Activated naive CD4-positive, alpha-beta T cell treated with anti-CD3 and anti-CD28 coated beads for 36 hours (primary cell): ENCODE measurements at regions of chr9 and their contacts with region 1.

Region 1: GRCh38 chr9:120936011-120936763 is 9.6 kb upstream of the TRAF1 start:
- DNase-seq: peak; percentile 97
- H3K4me3 Mint-ChIP-seq: peak overlapping the region; percentile 49
- H3K27ac Mint-ChIP-seq: peak overlapping the region; percentile 99
- H3K4me1 Mint-ChIP-seq: peaks cover 61% of the 10 kb centered on the region
- H3K27me3 Mint-ChIP-seq: no peaks in the 10 kb centered on the region

Region 2: GRCh38 chr9:120714088-120714845 is 221.9 kb before region 1 on chr9 and contains the start of gene MEGF9:
- CTCF ChIA-PET with region 1: no interaction called
- intact Hi-C with region 1: loop called (anchors 5 kb)
- DNase-seq: peak; percentile 99
- H3K4me3 Mint-ChIP-seq: peak within 1 kb of the TSS; percentile 84
- H3K27ac Mint-ChIP-seq: peak within 1 kb of the TSS; percentile 30
- H3K4me1 Mint-ChIP-seq: peaks cover 39% of the 10 kb centered on the region
- H3K27me3 Mint-ChIP-seq: no peaks in the 10 kb centered on the region
- total RNA-seq, gene MEGF9: 3.8 TPM

Region 3: DNA sequence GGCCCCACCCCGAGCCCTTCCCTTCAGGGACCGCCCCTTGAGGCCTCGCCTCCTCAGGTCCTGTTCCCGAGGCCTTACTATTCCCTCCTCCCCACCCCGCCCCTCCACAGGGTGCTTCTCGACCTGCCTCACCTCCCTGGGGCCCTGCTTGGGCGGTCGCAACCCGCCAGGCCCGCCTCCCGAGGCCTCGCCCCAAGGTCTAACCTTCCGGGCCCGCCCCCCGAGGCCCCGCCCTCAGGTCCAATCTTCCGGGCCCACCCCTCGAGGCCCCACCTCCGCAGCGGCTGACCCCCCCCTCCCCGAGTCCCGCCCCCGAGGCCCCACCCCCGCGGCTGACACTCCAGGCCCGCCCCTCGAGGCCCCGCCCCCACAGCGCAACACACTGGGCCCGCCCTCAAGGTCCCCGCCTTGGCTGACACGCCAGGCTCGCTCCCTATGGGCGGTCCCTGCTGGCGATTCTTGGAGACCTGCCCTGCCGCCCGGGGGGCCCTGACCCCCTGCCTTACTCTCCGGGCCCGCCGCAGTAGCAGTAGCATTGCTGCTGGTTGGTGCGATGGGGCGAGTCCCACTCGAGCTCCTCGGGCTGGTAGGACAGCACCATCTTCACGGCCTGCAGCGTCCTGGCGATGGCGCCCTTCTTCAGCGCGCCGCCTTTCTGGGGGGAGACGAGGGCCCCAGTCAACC is 67.4 kb before region 1 on chr9:
- CTCF ChIA-PET with region 1: interaction called, 7 read pairs
- intact Hi-C with region 1: loop called (anchors 1 kb)
- DNase-seq: peak; percentile 97
- H3K4me3 Mint-ChIP-seq: peak overlapping the region; percentile 74
- H3K27ac Mint-ChIP-seq: peak overlapping the region; percentile 87
- H3K4me1 Mint-ChIP-seq: peaks cover 49% of the 10 kb centered on the region
- H3K27me3 Mint-ChIP-seq: no peaks in the 10 kb centered on the region

Region 4: GRCh38 chr9:120892748-120893610 is 43.2 kb before region 1 on chr9:
- CTCF ChIA-PET with region 1: interaction called, 8 read pairs
- intact Hi-C with region 1: loop called (anchors 1 kb)
- DNase-seq: peak; percentile 86
- H3K4me3 Mint-ChIP-seq: peak overlapping the region; percentile 70
- H3K27ac Mint-ChIP-seq: peak overlapping the region; percentile 97
- H3K4me1 Mint-ChIP-seq: peaks cover 90% of the 10 kb centered on the region
- H3K27me3 Mint-ChIP-seq: no peaks in the 10 kb centered on the region

Region 5: DNA sequence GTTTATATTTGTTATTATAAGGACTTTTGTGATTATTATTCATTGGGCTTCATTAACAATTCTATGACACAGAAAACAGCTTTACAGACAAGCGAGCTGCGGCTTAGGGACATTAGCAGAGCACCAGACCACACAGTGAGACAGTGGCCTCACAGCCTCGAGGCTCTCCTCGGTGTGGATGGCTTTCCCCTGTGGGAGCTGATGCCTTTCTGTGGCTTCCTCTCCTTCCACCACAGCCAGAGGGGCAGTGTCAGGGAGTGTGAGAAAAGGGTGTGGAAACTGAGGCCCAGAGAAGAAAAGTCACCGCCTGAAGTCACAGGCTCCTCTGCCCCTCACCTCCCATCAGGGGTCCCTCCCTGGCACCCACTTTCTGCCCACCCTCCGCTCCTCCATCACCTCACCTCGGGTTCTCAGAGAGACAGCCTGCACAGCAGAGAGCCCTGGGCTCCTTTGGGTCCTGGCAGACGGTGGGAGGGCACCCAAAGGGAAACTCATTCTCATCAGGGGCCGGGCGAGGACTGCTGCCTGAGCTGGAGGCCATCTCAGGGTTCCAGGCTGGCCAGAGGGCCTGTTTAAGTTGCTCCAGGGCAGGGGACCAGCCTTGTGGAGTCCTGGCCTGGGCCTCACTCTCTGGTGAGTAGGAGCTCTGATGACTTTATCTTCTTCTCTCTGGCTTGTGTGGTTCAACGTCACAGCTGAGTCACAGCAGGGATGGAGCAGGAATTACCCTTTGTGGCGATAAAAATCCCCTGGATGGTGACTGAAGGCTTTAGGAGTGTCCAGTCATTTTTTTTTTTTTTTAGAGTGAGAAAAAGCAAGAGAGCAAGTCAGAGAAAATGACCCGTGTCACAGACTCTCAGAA is 10.4 kb before region 1 on chr9:
- CTCF ChIA-PET with region 1: interaction called, 11 read pairs
- intact Hi-C with region 1: loop called (anchors 1 kb)
- DNase-seq: peak; percentile 97
- H3K4me3 Mint-ChIP-seq: peak overlapping the region; percentile 92
- H3K27ac Mint-ChIP-seq: peak overlapping the region; percentile 98
- H3K4me1 Mint-ChIP-seq: peaks cover 74% of the 10 kb centered on the region
- H3K27me3 Mint-ChIP-seq: no peaks in the 10 kb centered on the region

Region 6: GRCh38 chr9:121201738-121202533 is 265.7 kb after region 1 on chr9 and contains the start of gene RAB14:
- CTCF ChIA-PET with region 1: no interaction called
- intact Hi-C with region 1: loop called (anchors 5 kb)
- DNase-seq: peak; percentile 100
- H3K4me3 Mint-ChIP-seq: peak within 1 kb of the TSS; percentile 91
- H3K27ac Mint-ChIP-seq: peak within 1 kb of the TSS; percentile 95
- H3K4me1 Mint-ChIP-seq: peaks cover 42% of the 10 kb centered on the region
- H3K27me3 Mint-ChIP-seq: no peaks in the 10 kb centered on the region
- total RNA-seq, gene RAB14: 61.1 to 64.2 TPM